ENCODE measurements at regions of chr12 and their contacts with region 1.

Region 1: DNA sequence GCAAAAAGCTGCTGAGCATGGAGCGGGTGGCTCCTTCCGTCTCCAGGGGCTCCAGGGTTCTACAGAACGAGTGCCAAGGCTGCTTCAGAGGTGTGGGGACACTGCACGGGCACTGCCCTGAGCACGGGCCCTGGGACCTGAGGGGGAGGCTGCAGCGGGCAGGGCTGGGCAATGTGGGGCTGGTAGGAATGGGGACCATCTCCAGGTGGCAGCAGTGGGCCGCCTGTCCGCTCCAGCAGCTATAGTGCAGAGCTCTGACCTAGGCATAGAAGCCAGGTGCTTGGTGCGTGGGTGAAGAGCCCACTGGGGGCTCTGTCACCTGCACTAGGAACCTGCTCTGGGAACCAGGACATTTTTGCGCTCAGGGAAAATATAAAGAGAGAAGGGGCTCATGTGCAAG is 22.3 kb downstream of the HDAC7 start:
- DNase-seq: peak; percentile 69
- ATAC-seq: peak; percentile 83
- H3K4me3 Mint-ChIP-seq: no peak overlapping the region
- H3K27ac Mint-ChIP-seq: no peak overlapping the region; the same call in 1 of the 2 replicates
- H3K4me1 Mint-ChIP-seq: peaks cover 28% of the 10 kb centered on the region
- H3K27me3 Mint-ChIP-seq: no peaks in the 10 kb centered on the region
- CTCF ChIP-seq: 0 out of 2 replicates have a peak, but pooled peaks have one; percentile 27

Region 2: GRCh38 chr12:47819896-47820630 is 22.6 kb after region 1 on chr12 and contains the start of gene HDAC7:
- CTCF ChIA-PET with region 1: interaction called, 28 read pairs
- POLR2A ChIA-PET with region 1: interaction called, 4 read pairs
- DNase-seq: peak; percentile 74
- ATAC-seq: peak; percentile 51
- H3K4me3 Mint-ChIP-seq: peak within 1 kb of the TSS; percentile 86
- H3K27ac Mint-ChIP-seq: peak within 1 kb of the TSS; percentile 98
- H3K4me1 Mint-ChIP-seq: peaks cover 59% of the 10 kb centered on the region
- H3K27me3 Mint-ChIP-seq: peaks cover 12% of the 10 kb centered on the region
- CTCF ChIP-seq: no peak
- total RNA-seq, gene HDAC7: 89.9 to 111 TPM (median 94.7 TPM) in 3 replicates

Region 3: GRCh38 chr12:47828608-47829536 is 31.4 kb after region 1 on chr12:
- CTCF ChIA-PET with region 1: interaction called, 408 read pairs
- POLR2A ChIA-PET with region 1: no interaction called
- DNase-seq: peak; percentile 58
- ATAC-seq: peak; percentile 84
- H3K4me3 Mint-ChIP-seq: 0 out of 2 replicates have a peak overlapping the region, but pooled peaks have one; percentile 14
- H3K27ac Mint-ChIP-seq: no peak overlapping the region
- H3K4me1 Mint-ChIP-seq: peaks cover 37% of the 10 kb centered on the region
- H3K27me3 Mint-ChIP-seq: peaks cover 4% of the 10 kb centered on the region; the same call in 1 of the 2 replicates
- CTCF ChIP-seq: no peak

Region 4: GRCh38 chr12:48030173-48030650 is 232.8 kb after region 1 on chr12:
- CTCF ChIA-PET with region 1: no interaction called
- POLR2A ChIA-PET with region 1: no interaction called
- DNase-seq: no peak
- ATAC-seq: no peak
- H3K4me3 Mint-ChIP-seq: no peak overlapping the region
- H3K27ac Mint-ChIP-seq: no peak overlapping the region
- H3K4me1 Mint-ChIP-seq: peaks cover 6% of the 10 kb centered on the region
- H3K27me3 Mint-ChIP-seq: peaks cover 100% of the 10 kb centered on the region
- CTCF ChIP-seq: no peak

Measured in WTC11 (cell line).